WTC11 (cell line): ENCODE measurements at regions of chr1 and their contacts with region 1.

Region 1: DNA sequence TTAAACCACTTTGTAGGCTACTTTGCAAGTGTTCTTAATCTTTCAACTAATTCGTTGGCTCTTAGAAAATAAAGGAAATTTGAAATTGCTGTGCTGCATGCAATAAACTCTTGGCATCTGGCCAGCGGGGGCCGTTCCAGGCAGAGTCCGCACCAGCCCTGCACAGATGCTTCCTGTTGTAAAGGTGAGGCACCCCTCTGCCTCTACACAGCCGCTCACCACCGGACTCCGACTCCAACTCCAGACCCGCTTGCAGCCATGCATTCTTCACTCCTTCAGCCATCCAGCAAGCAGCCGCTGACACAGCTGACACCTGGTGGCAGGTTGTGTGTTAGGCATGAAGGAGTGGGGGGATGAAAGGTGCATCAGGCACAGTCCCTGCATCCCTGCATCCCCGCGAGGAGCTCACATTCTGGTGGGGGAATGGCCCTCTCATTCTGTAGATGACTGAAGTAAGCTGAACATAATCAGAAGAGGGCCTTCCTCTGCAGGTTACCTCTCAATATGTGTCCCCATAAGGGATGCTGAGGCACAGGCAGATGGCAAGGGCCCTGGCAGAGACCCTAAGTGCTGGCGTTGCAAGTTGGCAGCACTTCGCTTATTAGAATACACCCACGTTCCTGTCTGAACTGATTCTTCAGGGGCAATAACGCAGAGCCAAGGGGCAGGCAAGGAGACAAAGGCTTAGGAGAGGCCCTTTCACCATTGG is 56.8 kb downstream of the GLIS1 start:
- DNase-seq: peak; percentile 84
- ATAC-seq: peak; percentile 88
- H3K4me3 Mint-ChIP-seq: peak overlapping the region; percentile 17; the same call in 1 of the 2 replicates
- H3K27ac Mint-ChIP-seq: no peak overlapping the region
- H3K4me1 Mint-ChIP-seq: peaks cover 35% of the 10 kb centered on the region
- H3K27me3 Mint-ChIP-seq: peaks cover 20% of the 10 kb centered on the region
- CTCF ChIP-seq: peak; percentile 39

Region 2: GRCh38 chr1:53606651-53607051 is 75.5 kb before region 1 on chr1:
- CTCF ChIA-PET with region 1: interaction called, 12 read pairs
- POLR2A ChIA-PET with region 1: no interaction called
- DNase-seq: peak; percentile 45
- ATAC-seq: peak; percentile 96
- H3K4me3 Mint-ChIP-seq: no peak overlapping the region
- H3K27ac Mint-ChIP-seq: no peak overlapping the region
- H3K4me1 Mint-ChIP-seq: peaks cover 6% of the 10 kb centered on the region; the same call in 1 of the 2 replicates
- H3K27me3 Mint-ChIP-seq: peaks cover 5% of the 10 kb centered on the region; the same call in 1 of the 2 replicates
- CTCF ChIP-seq: no peak

Region 3: GRCh38 chr1:53634571-53634979 is 47.6 kb before region 1 on chr1:
- CTCF ChIA-PET with region 1: interaction called, 11 read pairs
- POLR2A ChIA-PET with region 1: no interaction called
- DNase-seq: peak; percentile 23
- ATAC-seq: peak; percentile 84
- H3K4me3 Mint-ChIP-seq: no peak overlapping the region
- H3K27ac Mint-ChIP-seq: no peak overlapping the region
- H3K4me1 Mint-ChIP-seq: 0 out of 2 replicates have a peak, but pooled peaks cover 2% of the 10 kb centered on the region
- H3K27me3 Mint-ChIP-seq: no peaks in the 10 kb centered on the region; the same call in 1 of the 2 replicates
- CTCF ChIP-seq: no peak

Region 4: DNA sequence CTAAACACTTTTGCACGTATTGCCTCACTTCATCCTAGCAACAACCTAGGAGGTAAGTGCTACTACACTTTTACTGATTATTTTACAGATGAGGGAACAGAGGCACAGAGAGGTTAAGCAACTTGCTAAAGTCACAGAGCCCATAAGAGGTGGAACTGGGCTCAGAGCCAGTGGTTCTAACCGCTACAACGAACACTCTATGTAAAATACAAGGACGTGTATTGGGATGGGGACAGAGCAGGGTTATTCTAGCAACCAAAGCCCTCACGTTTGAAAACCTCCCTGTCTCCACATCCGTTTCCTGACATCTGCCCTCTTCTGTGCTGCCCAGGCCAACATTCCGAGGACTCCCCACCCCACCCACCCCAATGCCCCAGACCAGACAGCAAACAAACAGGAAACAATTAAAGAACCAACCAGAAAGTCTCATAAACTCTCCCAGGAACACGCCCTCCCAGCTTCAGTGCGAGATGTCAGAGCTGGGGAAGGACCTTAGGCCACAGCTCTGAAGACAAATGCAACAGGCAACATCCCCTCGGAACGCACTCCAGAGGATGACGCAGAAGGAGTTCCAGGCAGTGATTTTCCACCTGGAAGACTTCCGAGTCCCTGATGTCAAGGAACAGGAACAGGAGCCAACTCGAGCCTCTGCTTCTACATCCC is 15.7 kb after region 1 on chr1:
- CTCF ChIA-PET with region 1: interaction called, 39 read pairs
- POLR2A ChIA-PET with region 1: no interaction called
- DNase-seq: no peak
- ATAC-seq: no peak
- H3K4me3 Mint-ChIP-seq: no peak overlapping the region
- H3K27ac Mint-ChIP-seq: no peak overlapping the region
- H3K4me1 Mint-ChIP-seq: peaks cover 15% of the 10 kb centered on the region
- H3K27me3 Mint-ChIP-seq: no peaks in the 10 kb centered on the region
- CTCF ChIP-seq: no peak

Region 5: DNA sequence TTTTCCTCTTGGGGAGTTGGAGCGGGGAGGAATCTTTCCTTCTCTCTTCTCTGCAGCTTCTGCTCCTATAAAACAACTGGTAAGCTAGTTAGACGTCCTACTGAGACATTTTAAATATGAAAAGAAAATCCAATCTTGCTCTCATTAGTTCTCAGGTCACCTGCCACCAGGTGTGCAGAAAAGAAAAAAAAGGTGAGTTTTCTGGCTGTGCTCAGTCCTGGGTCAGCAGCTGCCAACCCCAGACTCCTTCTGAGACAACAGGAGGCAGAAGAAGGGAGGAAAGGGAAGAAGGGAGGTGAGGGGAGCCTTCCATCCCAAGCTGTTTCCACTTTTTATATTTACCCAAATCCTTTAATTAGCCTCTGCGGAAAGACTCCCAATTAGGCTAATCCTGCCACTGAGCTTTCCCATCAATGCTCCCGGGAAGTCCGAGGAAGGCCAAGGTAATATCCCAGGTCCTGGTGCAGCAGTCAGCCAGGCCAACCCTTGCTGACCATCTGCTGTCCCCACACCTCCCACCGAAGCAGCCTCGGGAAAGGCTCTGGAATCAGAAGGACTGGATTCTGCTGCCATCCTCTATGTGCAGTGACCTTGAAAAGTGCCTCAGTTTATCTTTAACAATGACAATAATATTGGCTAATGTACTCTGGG is 23.4 kb after region 1 on chr1:
- CTCF ChIA-PET with region 1: interaction called, 28 read pairs
- POLR2A ChIA-PET with region 1: no interaction called
- DNase-seq: no peak
- ATAC-seq: peak; percentile 67
- H3K4me3 Mint-ChIP-seq: peak overlapping the region; percentile 29
- H3K27ac Mint-ChIP-seq: peak overlapping the region; percentile 91
- H3K4me1 Mint-ChIP-seq: peaks cover 51% of the 10 kb centered on the region
- H3K27me3 Mint-ChIP-seq: no peaks in the 10 kb centered on the region; the same call in 1 of the 2 replicates
- CTCF ChIP-seq: no peak

Region 6: GRCh38 chr1:53715478-53715877 is 33.3 kb after region 1 on chr1:
- CTCF ChIA-PET with region 1: interaction called, 16 read pairs
- POLR2A ChIA-PET with region 1: no interaction called
- DNase-seq: peak; percentile 79
- ATAC-seq: peak; percentile 98
- H3K4me3 Mint-ChIP-seq: no peak overlapping the region
- H3K27ac Mint-ChIP-seq: no peak overlapping the region
- H3K4me1 Mint-ChIP-seq: no peaks in the 10 kb centered on the region; the same call in 1 of the 2 replicates
- H3K27me3 Mint-ChIP-seq: no peaks in the 10 kb centered on the region; the same call in 1 of the 2 replicates
- CTCF ChIP-seq: 0 out of 2 replicates have a peak, but pooled peaks have one; percentile 49

Region 7: DNA sequence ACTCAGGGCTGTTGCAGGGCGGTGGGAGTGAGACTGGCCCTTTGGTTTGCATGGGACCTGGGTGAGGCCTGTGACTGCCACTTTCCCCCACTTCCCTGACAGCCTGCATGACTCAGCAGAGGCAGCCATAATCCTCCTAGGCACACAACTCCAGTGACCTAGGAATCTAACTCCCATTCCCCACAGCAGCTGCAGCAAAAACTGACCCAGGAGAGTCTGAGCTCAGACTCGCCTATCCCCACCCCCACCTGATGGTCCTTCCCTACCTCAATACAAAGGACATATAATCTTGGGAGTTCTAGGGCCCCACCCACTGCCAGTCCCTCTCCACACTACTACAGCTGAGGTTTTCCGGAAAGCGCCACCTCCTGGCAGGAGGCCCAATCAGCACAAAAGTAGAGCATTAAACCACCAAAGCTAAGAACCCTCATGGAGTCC is 129.3 kb after region 1 on chr1:
- CTCF ChIA-PET with region 1: no interaction called
- POLR2A ChIA-PET with region 1: no interaction called
- DNase-seq: peak; percentile 73
- ATAC-seq: peak; percentile 92
- H3K4me3 Mint-ChIP-seq: no peak overlapping the region
- H3K27ac Mint-ChIP-seq: peak overlapping the region; percentile 22; the same call in 1 of the 2 replicates
- H3K4me1 Mint-ChIP-seq: peaks cover 16% of the 10 kb centered on the region
- H3K27me3 Mint-ChIP-seq: no peaks in the 10 kb centered on the region; the same call in 1 of the 2 replicates
- CTCF ChIP-seq: peak; percentile 41; the same call in 1 of the 2 replicates